ENCODE measurements at regions of chr21 and their contacts with region 1.

Region 1: DNA sequence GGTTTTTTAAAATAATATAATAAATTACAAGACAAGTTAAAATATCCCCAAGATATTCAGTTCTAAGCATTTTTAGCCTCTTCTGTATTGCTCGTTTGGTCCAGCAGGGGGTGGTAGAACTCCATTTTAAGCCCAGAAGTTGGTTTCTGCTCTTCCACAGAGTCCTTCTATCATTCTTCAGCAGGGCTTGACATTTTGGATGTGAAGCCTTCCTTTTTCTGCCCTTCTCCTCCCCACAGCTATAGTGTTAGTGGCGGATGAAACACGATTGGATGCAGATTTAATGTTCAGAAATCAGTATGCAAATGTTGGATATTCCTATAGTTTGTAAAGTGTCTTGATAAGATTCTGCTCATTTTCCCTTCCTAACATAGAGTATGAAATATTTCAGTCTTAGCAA is 1.4 kb downstream of the NCAM2 start:
- DNase-seq: peak in 1 of 2 experiments; percentile 42
- H3K4me3 ChIP-seq: no peak overlapping the region
- H3K4me3 Mint-ChIP-seq: no peak overlapping the region
- H3K27ac Mint-ChIP-seq: no peak overlapping the region
- H3K4me1 ChIP-seq: no peaks in the 10 kb centered on the region
- H3K4me1 Mint-ChIP-seq: no peaks in the 10 kb centered on the region
- H3K27me3 ChIP-seq: no peaks in the 10 kb centered on the region
- H3K27me3 Mint-ChIP-seq: peaks cover 14% of the 10 kb centered on the region
- CTCF ChIP-seq: peak; percentile 61 to 63

Region 2: DNA sequence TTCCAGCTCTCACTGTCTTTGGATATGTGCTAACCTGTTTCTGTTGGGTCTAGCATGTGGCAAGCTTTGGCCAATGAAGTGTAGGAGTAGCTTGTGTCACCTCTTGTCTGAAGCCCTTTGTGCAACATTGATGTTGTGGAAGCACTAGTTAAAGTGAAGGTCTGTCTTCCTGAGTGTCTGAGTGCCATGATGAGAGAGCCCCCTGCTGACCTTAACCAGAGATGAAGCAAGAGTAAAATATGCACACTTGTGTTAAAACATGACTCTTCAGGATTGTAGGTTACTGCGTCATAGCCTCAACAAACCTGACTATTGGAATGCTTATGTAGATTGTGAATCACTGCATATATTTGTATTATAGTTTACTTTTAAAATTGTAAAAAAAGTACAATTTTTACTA is 102.3 kb after region 1 on chr21:
- CTCF ChIA-PET with region 1: interaction called, 3 read pairs
- POLR2A ChIA-PET with region 1: no interaction called
- intact Hi-C with region 1: loop called (anchors 1 kb)
- DNase-seq: peak; percentile 39 to 46
- H3K4me3 ChIP-seq: no peak overlapping the region
- H3K4me3 Mint-ChIP-seq: no peak overlapping the region
- H3K27ac Mint-ChIP-seq: no peak overlapping the region
- H3K4me1 ChIP-seq: no peaks in the 10 kb centered on the region
- H3K4me1 Mint-ChIP-seq: no peaks in the 10 kb centered on the region
- H3K27me3 ChIP-seq: no peaks in the 10 kb centered on the region
- H3K27me3 Mint-ChIP-seq: peaks cover 6% of the 10 kb centered on the region
- CTCF ChIP-seq: peak; percentile 31 to 34

Measured in Caco-2 (cell line).